H1 (cell line): ENCODE measurements at regions of chr1 and their contacts with region 1.

Region 1: DNA sequence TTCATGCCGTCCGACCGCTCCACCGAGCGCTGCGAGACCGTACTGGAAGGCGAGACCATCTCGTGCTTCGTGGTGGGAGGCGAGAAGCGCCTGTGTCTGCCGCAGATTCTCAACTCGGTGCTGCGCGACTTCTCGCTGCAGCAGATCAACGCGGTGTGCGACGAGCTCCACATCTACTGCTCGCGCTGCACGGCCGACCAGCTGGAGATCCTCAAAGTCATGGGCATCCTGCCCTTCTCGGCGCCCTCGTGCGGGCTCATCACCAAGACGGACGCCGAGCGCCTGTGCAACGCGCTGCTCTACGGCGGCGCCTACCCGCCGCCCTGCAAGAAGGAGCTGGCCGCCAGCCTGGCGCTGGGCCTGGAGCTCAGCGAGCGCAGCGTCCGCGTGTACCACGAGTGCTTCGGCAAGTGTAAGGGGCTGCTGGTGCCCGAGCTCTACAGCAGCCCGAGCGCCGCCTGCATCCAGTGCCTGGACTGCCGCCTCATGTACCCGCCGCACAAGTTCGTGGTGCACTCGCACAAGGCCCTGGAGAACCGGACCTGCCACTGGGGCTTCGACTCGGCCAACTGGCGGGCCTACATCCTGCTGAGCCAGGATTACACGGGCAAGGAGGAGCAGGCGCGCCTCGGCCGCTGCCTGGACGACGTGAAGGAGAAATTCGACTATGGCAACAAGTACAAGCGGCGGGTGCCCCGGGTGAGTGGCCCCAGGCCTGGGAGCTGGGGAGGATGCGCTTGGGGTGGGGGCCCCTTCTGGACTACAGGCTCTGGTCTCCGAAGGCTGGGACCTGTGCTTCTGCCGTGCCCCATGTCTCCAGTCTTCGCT is 1.1 kb downstream of the SKI start:
- DNase-seq: no peak
- H3K4me3 ChIP-seq: peak overlapping the region; percentile 72 to 83 (median 80)
- H3K27ac ChIP-seq: no peak overlapping the region
- H3K4me1 ChIP-seq: peaks cover 0 to 47% (median 26%) of the 10 kb centered on the region in 4 experiments; a peak in 6 of 7 replicates
- H3K27me3 ChIP-seq: no peaks in the 10 kb centered on the region
- CTCF ChIP-seq: no peak
- EP300 ChIP-seq: no peak
- POLR2A ChIP-seq: no peak
- RAD21 ChIP-seq: no peak

Region 2: GRCh38 chr1:2163205-2163604 is 66.0 kb before region 1 on chr1:
- CTCF ChIA-PET with region 1: no interaction called
- POLR2A ChIA-PET with region 1: no interaction called
- DNase-seq: no peak
- H3K4me3 ChIP-seq: no peak overlapping the region
- H3K27ac ChIP-seq: no peak overlapping the region
- H3K4me1 ChIP-seq: peaks cover 0 to 3% (median 0%) of the 10 kb centered on the region in 4 experiments; a peak in 2 of 7 replicates
- H3K27me3 ChIP-seq: no peaks in the 10 kb centered on the region
- CTCF ChIP-seq: peak in 1 of 3 experiments; percentile 14; a peak in 2 of 4 replicates
- EP300 ChIP-seq: no peak
- POLR2A ChIP-seq: no peak
- RAD21 ChIP-seq: peak; percentile 21 to 43; a peak in 2 of 4 replicates

Region 3: DNA sequence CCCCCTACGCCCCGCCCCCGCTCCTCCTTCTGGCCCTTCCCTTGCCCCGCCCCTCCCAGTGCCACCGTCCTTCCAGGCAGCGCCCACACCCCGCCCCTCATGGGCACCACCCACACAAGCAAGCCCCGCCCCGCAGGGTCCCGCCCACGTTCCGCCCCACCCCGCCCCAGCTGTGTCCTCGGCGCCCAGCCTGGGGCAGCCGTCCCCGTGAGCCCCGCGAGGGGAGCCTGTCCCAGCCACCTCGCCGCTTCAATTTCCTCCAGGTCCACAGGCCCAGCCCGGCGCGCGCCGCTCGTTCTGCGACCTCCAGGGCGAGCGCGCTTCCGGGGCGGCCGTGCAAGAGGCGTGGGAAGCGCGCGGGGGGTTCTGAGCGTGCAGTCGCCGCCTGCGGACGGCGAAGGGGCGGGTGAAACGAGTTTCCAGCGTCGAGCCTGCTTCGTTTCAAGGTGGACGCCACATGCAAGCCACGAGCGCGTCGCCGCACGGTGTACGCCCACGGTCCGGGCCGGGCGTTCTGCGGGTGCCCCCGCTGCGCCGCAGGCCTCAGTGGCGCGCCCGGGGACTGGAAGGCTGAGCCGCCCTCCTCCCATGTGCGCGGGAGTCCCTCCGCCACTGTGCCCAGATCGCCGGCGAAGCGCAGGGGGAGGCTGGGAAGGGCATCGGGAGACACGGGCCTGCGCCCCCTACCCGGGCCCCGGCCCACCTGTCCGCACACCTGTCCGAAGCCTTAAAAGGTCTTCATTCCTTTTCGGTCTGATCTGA is 23.9 kb before region 1 on chr1:
- CTCF ChIA-PET with region 1: interaction called, 6 read pairs
- POLR2A ChIA-PET with region 1: interaction called, 21 read pairs
- DNase-seq: peak; percentile 80 to 98
- H3K4me3 ChIP-seq: peak overlapping the region; percentile 30 to 68 (median 38)
- H3K27ac ChIP-seq: no peak overlapping the region
- H3K4me1 ChIP-seq: peaks cover 3 to 16% (median 9%) of the 10 kb centered on the region in 4 experiments
- H3K27me3 ChIP-seq: peaks cover 0 to 11% (median 6%) of the 10 kb centered on the region in 4 experiments; a peak in 4 of 7 replicates
- CTCF ChIP-seq: no peak
- EP300 ChIP-seq: no peak
- POLR2A ChIP-seq: peak in 1 of 2 experiments; percentile 17; a peak in 1 of 3 replicates
- RAD21 ChIP-seq: no peak

Region 4: GRCh38 chr1:2212542-2213491 is 16.4 kb before region 1 on chr1:
- CTCF ChIA-PET with region 1: interaction called, 6 read pairs
- POLR2A ChIA-PET with region 1: interaction called, 21 read pairs
- DNase-seq: peak; percentile 79 to 92
- H3K4me3 ChIP-seq: peak overlapping the region; percentile 19 to 55 (median 44); a peak in 7 of 8 replicates
- H3K27ac ChIP-seq: peak overlapping the region; percentile 82
- H3K4me1 ChIP-seq: peaks cover 0 to 19% (median 11%) of the 10 kb centered on the region in 4 experiments; a peak in 6 of 7 replicates
- H3K27me3 ChIP-seq: no peaks in the 10 kb centered on the region
- CTCF ChIP-seq: peak in 2 of 3 experiments; percentile 37 to 55; a peak in 3 of 4 replicates
- EP300 ChIP-seq: peak in 1 of 2 experiments; percentile 44; a peak in 1 of 3 replicates
- POLR2A ChIP-seq: peak in 1 of 2 experiments; percentile 87; a peak in 2 of 3 replicates
- RAD21 ChIP-seq: peak in 1 of 2 experiments; percentile 43; a peak in 2 of 4 replicates

Region 5: DNA sequence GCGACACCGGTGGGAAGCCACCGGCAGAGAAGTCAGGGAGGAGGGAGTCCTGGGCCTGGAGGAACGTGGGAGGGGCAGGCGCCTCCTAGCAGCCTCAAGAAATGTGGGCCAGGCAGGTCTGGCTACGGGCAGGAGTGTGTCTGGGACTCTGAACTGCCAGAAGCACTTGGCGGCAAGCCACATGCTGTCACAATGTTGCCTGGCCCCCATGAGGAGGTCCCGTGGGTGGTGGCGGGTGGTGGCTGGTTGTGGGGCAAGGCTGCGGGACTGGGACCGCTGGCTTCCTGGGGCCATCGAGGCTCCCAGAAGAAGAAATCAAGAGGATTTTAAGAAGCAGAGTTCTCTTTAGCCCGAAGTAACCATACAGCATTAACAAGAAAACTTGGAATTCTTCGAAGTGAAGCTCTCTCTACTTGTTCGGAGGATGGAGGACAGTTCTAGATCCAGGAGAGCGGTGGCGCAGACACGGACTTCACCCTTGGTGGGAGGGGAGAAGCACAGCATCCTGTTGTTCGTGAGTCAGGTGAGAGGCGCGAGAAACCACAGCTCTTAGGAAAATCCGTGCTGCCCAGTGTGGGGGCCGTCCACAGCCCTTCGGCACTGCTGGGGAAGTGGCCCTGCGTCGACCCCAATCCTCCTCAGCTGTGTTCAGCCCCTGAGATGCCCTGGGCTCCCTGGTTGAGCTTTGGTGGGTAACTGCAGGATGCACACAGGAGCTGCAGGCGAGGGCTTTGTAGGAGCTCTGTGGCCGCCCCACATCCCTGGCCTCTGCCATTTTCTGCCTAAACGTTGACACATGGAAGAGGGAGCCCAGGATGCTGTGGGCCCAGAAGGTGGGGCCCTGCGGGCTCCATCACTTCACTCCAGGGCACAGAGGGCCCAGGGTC is 11.3 kb after region 1 on chr1:
- CTCF ChIA-PET with region 1: interaction called, 9 read pairs
- POLR2A ChIA-PET with region 1: interaction called, 34 read pairs
- DNase-seq: no peak
- H3K4me3 ChIP-seq: no peak overlapping the region
- H3K27ac ChIP-seq: no peak overlapping the region
- H3K4me1 ChIP-seq: peaks cover 0 to 16% (median 6%) of the 10 kb centered on the region in 4 experiments; a peak in 5 of 7 replicates
- H3K27me3 ChIP-seq: no peaks in the 10 kb centered on the region
- CTCF ChIP-seq: no peak
- EP300 ChIP-seq: no peak
- POLR2A ChIP-seq: no peak
- RAD21 ChIP-seq: no peak

Region 6: GRCh38 chr1:2248127-2248826 is 19.0 kb after region 1 on chr1:
- CTCF ChIA-PET with region 1: interaction called, 8 read pairs
- POLR2A ChIA-PET with region 1: interaction called, 10 read pairs
- DNase-seq: peak; percentile 90 to 92
- H3K4me3 ChIP-seq: peak overlapping the region in 1 of 4 experiments; percentile 38; a peak in 2 of 8 replicates
- H3K27ac ChIP-seq: peak overlapping the region; percentile 93
- H3K4me1 ChIP-seq: peaks cover 16 to 48% (median 41%) of the 10 kb centered on the region in 4 experiments
- H3K27me3 ChIP-seq: no peaks in the 10 kb centered on the region
- CTCF ChIP-seq: no peak
- EP300 ChIP-seq: peak in 1 of 2 experiments; percentile 70; a peak in 1 of 3 replicates
- POLR2A ChIP-seq: peak in 1 of 2 experiments; percentile 50; a peak in 1 of 3 replicates
- RAD21 ChIP-seq: peak; percentile 10 to 23; a peak in 3 of 4 replicates

Region 7: DNA sequence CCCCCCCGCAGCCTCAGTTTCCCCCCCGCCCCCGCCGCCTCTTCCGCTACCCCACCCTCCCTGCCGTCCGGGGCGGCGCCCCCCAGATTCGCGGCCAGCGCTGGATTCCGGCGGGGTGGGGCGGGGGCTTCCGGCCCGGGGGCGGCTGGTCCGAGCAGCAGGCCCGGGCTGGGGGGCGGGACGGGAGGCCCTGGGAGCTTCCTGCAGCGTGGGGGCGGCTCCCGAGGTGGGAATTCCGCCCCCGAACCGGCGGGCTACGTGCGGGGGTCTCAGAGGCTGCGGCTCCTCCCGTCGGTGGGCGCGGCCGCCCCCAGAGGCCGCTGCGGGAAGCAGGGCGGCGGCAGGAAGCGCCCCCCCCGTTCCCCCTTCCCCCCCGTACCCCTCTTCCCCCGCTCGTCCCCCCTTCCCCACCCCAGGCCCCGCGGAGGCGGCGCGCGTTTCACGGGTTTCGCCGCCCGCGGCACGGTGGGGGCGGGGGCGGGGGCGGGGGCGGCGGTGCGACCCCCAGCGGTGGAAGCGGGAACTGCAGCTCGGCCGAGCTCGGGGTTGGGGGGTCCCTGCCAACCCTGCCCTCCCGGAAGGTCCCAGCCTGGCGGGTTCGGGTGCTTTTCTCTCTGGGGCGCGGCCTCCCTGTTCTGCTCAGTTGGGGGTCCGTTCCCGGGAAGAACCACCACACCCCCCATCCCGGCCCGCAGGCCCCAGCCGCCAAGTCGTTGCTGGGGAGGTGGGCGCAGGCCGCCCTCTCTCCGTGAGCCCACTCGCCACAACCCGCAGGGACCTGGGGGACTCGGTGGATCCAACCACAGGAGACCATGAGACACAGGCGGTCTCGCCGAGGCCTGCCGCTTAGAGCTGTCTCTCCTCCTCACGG is 85.8 kb after region 1 on chr1:
- CTCF ChIA-PET with region 1: interaction called, 16 read pairs
- POLR2A ChIA-PET with region 1: interaction called, 7 read pairs
- DNase-seq: peak in 1 of 2 experiments; percentile 76
- H3K4me3 ChIP-seq: peak overlapping the region in 3 of 4 experiments; percentile 19 to 53 (median 36); a peak in 4 of 8 replicates
- H3K27ac ChIP-seq: peak overlapping the region; percentile 34; the same call in 1 of the 2 replicates
- H3K4me1 ChIP-seq: peaks cover 7 to 43% (median 30%) of the 10 kb centered on the region in 4 experiments
- H3K27me3 ChIP-seq: no peaks in the 10 kb centered on the region
- CTCF ChIP-seq: peak in 2 of 3 experiments; percentile 21 to 40; a peak in 2 of 4 replicates
- EP300 ChIP-seq: no peak
- POLR2A ChIP-seq: no peak
- RAD21 ChIP-seq: peak in 1 of 2 experiments; percentile 4; a peak in 1 of 4 replicates

Region 8: DNA sequence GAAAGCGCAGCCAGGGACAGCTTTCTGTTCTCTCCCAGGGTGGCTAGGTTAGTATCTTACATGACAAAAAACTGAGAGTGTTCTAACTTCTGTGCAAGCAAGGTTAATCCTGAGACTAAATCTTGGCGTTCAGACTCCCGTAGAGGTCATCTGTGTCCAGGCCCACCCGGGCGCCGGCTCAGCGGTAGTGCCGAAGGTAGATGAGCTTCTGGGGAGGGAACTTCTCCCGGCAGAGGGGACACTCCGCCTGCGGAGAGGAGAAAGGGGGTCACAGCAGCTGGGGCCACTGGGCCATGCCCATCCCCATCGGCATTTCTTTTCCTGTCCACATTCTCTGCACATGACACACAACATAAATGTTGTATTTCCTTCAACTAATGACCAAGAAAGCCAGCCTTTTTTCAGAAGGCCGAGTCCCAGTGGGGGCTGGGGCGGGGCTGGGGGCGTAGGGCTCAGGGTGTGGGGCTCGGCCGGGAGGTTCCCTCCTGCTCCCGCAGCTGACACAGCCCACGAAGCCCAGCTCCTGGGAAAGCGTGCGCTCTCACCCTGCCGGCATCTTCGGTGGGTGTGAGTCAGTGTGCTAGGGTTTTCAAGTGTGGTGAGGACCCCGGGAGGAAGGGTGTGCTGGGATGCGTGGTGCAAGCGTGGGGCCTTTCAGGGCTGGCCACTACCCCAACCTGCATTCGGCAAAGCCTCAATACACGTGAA is 176.5 kb after region 1 on chr1:
- CTCF ChIA-PET with region 1: no interaction called
- POLR2A ChIA-PET with region 1: no interaction called
- DNase-seq: no peak
- H3K4me3 ChIP-seq: no peak overlapping the region
- H3K27ac ChIP-seq: no peak overlapping the region
- H3K4me1 ChIP-seq: no peaks in the 10 kb centered on the region
- H3K27me3 ChIP-seq: no peaks in the 10 kb centered on the region
- CTCF ChIP-seq: no peak
- EP300 ChIP-seq: no peak
- POLR2A ChIP-seq: no peak; a peak in 1 of 3 replicates
- RAD21 ChIP-seq: no peak